ENCODE measurements at regions of chr11 and their contacts with region 1.

Region 1: DNA sequence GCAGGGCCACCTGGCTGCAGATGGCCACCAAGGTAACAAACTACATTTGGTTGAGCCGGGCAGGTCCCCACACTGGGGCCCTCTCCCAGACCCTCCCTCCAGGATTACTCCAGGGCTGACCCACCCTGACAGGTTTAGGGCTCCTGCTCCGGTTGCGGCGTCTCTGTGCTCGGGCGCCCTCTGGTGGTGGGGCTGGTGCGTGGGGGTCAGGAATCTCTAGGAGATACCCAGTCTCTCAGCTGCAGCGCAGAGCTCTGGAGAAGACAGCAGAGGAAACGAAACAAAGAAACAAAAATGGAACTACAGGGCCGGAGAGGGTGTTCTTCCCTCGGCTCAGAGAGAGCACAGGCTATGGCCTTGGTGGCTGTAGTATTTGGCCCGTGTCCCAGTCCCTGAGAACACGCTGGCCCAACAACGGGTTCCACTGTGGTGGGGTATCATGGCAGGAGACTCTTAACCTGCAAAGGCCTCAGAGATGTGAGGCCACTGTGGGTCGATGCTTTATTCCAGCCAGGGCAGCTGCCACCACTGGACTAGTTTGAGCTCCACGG is 2.4 kb downstream of the C11orf96 start:
- DNase-seq: peak in 5 of 9 donors; percentile 17 to 86 (median 35)
- ATAC-seq: peak; percentile 60
- H3K4me3 ChIP-seq: no peak overlapping the region
- H3K4me3 Mint-ChIP-seq: peak overlapping the region; percentile 48 to 95 (median 70)
- H3K27ac ChIP-seq: no peak overlapping the region
- H3K27ac Mint-ChIP-seq: peak overlapping the region in 2 of 9 donors; percentile 13 to 62
- H3K4me1 ChIP-seq: peaks cover 0 to 5% of the 10 kb centered on the region in 2 donors
- H3K4me1 Mint-ChIP-seq: peaks cover 12 to 20% (median 16%) of the 10 kb centered on the region in 7 donors
- H3K27me3 ChIP-seq: peaks cover 0 to 8% of the 10 kb centered on the region in 2 donors
- H3K27me3 Mint-ChIP-seq: peaks cover 55 to 78% (median 65%) of the 10 kb centered on the region in 5 donors

Region 2: GRCh38 chr11:43643898-43644620 is 300.8 kb before region 1 on chr11:
- CTCF ChIA-PET with region 1: no interaction called
- POLR2A ChIA-PET with region 1: no interaction called
- intact Hi-C with region 1: loop called in 1 of 2 experiments (anchors 5 kb)
- DNase-seq: peak; percentile 70 to 89 (median 86)
- ATAC-seq: peak; percentile 100
- H3K4me3 ChIP-seq: peak overlapping the region; percentile 95
- H3K4me3 Mint-ChIP-seq: peak overlapping the region; percentile 87 to 98 (median 94)
- H3K27ac ChIP-seq: peak overlapping the region; percentile 85
- H3K27ac Mint-ChIP-seq: peak overlapping the region; percentile 51 to 95 (median 90)
- H3K4me1 ChIP-seq: peaks cover 7 to 10% of the 10 kb centered on the region in 2 donors
- H3K4me1 Mint-ChIP-seq: peaks cover 7 to 31% (median 23%) of the 10 kb centered on the region in 7 donors
- H3K27me3 ChIP-seq: no peaks in the 10 kb centered on the region
- H3K27me3 Mint-ChIP-seq: peaks cover 12 to 18% (median 17%) of the 10 kb centered on the region in 5 donors

Region 3: GRCh38 chr11:43680521-43681400 is 264.1 kb before region 1 on chr11 and contains the start of gene HSD17B12:
- CTCF ChIA-PET with region 1: no interaction called
- POLR2A ChIA-PET with region 1: no interaction called
- intact Hi-C with region 1: loop called in 1 of 2 experiments (anchors 5 kb)
- DNase-seq: peak; percentile 91 to 100 (median 99)
- ATAC-seq: peak; percentile 99
- H3K4me3 ChIP-seq: peak within 1 kb of the TSS; percentile 81
- H3K4me3 Mint-ChIP-seq: peak within 1 kb of the TSS; percentile 85 to 99 (median 96)
- H3K27ac ChIP-seq: peak within 1 kb of the TSS; percentile 89
- H3K27ac Mint-ChIP-seq: peak within 1 kb of the TSS; percentile 84 to 98 (median 97)
- H3K4me1 ChIP-seq: peaks cover 4 to 8% of the 10 kb centered on the region in 2 donors
- H3K4me1 Mint-ChIP-seq: peaks cover 11 to 59% (median 43%) of the 10 kb centered on the region in 7 donors
- H3K27me3 ChIP-seq: no peaks in the 10 kb centered on the region
- H3K27me3 Mint-ChIP-seq: peaks cover 0 to 14% (median 2%) of the 10 kb centered on the region in 5 donors
- total RNA-seq, gene HSD17B12: 21.1 to 39.5 (median 24.7) TPM

Region 4: DNA sequence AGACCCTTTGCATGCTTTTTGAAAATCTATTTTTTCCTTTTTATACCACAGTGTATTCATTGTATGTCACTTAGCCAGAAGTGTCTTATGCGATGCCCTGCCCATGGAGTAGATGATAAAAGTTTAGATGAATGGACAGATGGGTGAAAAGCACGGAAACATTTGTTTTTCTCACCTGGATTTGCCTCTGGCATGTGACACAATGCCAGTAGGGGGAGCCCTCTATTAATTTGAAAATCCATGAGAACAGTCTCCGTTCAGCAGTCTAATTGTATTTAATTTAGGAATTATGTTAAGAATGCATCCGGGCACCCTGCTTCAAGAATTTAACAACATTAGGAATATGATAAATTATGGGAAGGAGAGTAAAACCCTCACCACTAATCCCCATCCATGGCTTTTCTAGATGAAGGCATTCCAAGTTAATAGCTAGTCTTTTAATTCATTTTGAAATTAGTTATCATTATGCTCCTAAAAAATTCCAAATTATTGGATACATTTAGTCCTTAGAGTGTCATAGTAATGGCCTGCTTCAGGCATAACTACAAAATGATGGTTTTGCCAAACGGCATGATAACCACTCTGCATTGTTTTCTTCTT is 119.5 kb before region 1 on chr11:
- CTCF ChIA-PET with region 1: no interaction called
- POLR2A ChIA-PET with region 1: no interaction called
- intact Hi-C with region 1: loop called in 1 of 2 experiments (anchors 2 kb)
- DNase-seq: no peak
- ATAC-seq: no peak
- H3K4me3 ChIP-seq: no peak overlapping the region
- H3K4me3 Mint-ChIP-seq: no peak overlapping the region
- H3K27ac ChIP-seq: no peak overlapping the region
- H3K27ac Mint-ChIP-seq: no peak overlapping the region
- H3K4me1 ChIP-seq: no peaks in the 10 kb centered on the region
- H3K4me1 Mint-ChIP-seq: peaks cover 0 to 4% (median 0%) of the 10 kb centered on the region in 7 donors
- H3K27me3 ChIP-seq: no peaks in the 10 kb centered on the region
- H3K27me3 Mint-ChIP-seq: no peaks in the 10 kb centered on the region

Region 5: GRCh38 chr11:43895601-43896000 is 49.2 kb before region 1 on chr11:
- CTCF ChIA-PET with region 1: no interaction called
- POLR2A ChIA-PET with region 1: no interaction called
- intact Hi-C with region 1: loop called (anchors 1 to 2 kb)
- DNase-seq: no peak
- ATAC-seq: no peak
- H3K4me3 ChIP-seq: no peak overlapping the region
- H3K4me3 Mint-ChIP-seq: no peak overlapping the region
- H3K27ac ChIP-seq: no peak overlapping the region
- H3K27ac Mint-ChIP-seq: no peak overlapping the region
- H3K4me1 ChIP-seq: no peaks in the 10 kb centered on the region
- H3K4me1 Mint-ChIP-seq: peaks cover 0 to 15% (median 9%) of the 10 kb centered on the region in 7 donors
- H3K27me3 ChIP-seq: no peaks in the 10 kb centered on the region
- H3K27me3 Mint-ChIP-seq: no peaks in the 10 kb centered on the region

Measured in naive thymus-derived CD4-positive, alpha-beta T cell (primary cell).